ENCODE measurements at regions of chr17 and their contacts with region 1.

Region 1: DNA sequence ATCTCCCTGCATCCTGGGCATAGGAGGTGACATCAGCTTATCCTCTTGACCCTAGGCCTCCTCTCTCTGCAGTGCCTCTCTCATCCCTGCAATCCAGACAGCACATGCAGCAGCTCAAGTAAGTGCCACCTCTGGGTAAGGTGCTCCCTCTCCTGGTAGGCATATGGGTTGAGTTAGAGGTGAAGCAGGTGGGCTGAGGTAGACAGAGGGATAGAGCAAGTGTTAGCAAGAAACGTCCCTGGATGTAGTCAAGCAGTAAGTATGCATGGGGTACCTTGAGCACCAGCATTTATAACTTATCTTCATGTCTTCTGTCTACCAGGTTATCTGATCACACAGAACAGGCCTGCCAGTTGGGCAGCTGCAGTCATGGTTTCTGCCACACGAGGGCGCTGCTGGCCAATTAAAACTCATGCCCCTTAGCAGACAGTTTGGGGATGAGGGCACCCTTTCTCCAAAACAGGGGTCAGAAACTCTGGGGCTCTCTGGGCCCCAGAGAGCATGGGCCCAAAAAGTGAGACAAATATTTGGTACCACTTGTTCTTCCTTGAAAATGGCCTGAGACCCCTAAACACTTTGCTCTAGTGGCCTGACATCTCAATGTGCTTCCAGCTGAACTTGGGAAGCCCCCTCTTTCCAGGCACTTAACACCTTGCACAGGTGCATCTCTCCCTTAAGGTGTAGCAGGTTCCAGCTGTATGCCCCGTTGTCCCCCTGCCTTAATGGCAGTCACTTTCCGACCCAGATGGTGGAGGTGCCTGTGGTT is 59.8 kb downstream of the NEUROD2 start:
- DNase-seq: peak; percentile 94
- H3K4me3 ChIP-seq: no peak overlapping the region
- H3K27ac ChIP-seq: no peak overlapping the region
- H3K4me1 ChIP-seq: peaks cover 14 to 20% (median 17%) of the 10 kb centered on the region in 4 donors
- H3K27me3 ChIP-seq: no peaks in the 10 kb centered on the region
- CTCF ChIP-seq: peak; percentile 81 to 95 (median 90)
- EP300 ChIP-seq: no peak
- POLR2A ChIP-seq: no peak

Region 2: DNA sequence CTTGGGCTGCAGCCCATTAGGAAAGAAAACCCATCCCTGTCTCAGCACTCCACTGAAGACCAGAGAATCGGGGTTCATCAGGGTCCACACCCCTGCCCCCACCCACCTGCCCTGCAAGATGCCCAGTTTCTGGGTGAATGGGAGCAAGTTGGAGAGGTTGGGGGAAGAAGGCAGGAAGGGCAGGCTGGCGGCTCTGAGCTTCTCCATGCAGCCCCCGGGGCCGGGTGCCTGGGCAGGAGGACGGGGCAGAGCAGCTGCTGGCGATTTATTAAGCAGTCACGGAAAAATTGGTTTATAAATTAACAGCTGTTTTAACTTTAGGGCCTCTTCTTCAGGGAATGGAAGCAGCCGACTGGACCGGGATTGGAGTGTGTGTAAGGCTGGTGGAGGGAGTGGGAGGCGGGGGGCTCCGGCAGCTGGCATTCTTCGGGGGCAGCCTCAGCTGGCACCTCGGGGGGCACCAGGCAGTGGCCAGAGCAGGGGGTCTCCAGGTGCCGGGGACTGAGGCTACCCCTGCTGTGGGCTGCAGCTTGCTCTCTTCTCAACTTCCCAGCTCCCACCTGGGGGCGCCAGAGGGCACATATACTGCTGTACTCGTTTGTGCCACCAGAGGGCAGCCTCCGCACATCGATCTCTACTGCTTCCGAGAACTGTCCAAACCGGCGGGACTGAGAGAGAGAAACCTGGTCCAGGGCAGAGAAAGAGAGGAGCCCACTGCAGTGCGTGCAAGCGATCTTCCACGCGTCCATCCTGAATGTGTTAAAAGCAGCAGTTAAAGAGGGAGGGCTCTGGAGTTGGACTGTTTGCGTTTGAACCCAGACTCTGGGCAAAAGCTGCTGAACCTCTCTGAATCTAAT is 73.9 kb after region 1 on chr17:
- intact Hi-C with region 1: loop called (anchors 2 kb)
- DNase-seq: peak; percentile 99
- H3K4me3 ChIP-seq: no peak overlapping the region
- H3K27ac ChIP-seq: no peak overlapping the region
- H3K4me1 ChIP-seq: peaks cover 3 to 47% (median 36%) of the 10 kb centered on the region in 4 donors
- H3K27me3 ChIP-seq: peaks cover 0 to 48% (median 11%) of the 10 kb centered on the region in 4 donors
- CTCF ChIP-seq: peak; percentile 99 to 100 (median 100)
- EP300 ChIP-seq: no peak
- POLR2A ChIP-seq: no peak

Region 3: GRCh38 chr17:39699818-39700147 is 151.9 kb after region 1 on chr17 and contains the start of gene ERBB2:
- intact Hi-C with region 1: no loop called
- DNase-seq: no peak
- H3K4me3 ChIP-seq: peak within 1 kb of the TSS; percentile 93 to 99 (median 97)
- H3K27ac ChIP-seq: peak within 1 kb of the TSS; percentile 85 to 92 (median 87)
- H3K4me1 ChIP-seq: peaks cover 25 to 51% (median 43%) of the 10 kb centered on the region in 4 donors
- H3K27me3 ChIP-seq: no peaks in the 10 kb centered on the region
- CTCF ChIP-seq: no peak
- EP300 ChIP-seq: no peak
- POLR2A ChIP-seq: no peak
- total RNA-seq, gene ERBB2: 36.8 to 67.7 (median 57.7) TPM

Measured in esophagus muscularis mucosa (tissue), 4 donors.